ENCODE measurements at regions of chr1 and their contacts with region 1.

Region 1: GRCh38 chr1:6794164-6794563 is 8.9 kb downstream of the CAMTA1 start:
- DNase-seq: peak; percentile 71
- H3K4me3 ChIP-seq: no peak overlapping the region
- H3K27ac ChIP-seq: no peak overlapping the region
- H3K4me1 ChIP-seq: peaks cover 29% of the 10 kb centered on the region
- H3K27me3 ChIP-seq: no peaks in the 10 kb centered on the region
- CTCF ChIP-seq: peak in 1 of 2 donors; percentile 16
- POLR2A ChIP-seq: no peak

Region 2: DNA sequence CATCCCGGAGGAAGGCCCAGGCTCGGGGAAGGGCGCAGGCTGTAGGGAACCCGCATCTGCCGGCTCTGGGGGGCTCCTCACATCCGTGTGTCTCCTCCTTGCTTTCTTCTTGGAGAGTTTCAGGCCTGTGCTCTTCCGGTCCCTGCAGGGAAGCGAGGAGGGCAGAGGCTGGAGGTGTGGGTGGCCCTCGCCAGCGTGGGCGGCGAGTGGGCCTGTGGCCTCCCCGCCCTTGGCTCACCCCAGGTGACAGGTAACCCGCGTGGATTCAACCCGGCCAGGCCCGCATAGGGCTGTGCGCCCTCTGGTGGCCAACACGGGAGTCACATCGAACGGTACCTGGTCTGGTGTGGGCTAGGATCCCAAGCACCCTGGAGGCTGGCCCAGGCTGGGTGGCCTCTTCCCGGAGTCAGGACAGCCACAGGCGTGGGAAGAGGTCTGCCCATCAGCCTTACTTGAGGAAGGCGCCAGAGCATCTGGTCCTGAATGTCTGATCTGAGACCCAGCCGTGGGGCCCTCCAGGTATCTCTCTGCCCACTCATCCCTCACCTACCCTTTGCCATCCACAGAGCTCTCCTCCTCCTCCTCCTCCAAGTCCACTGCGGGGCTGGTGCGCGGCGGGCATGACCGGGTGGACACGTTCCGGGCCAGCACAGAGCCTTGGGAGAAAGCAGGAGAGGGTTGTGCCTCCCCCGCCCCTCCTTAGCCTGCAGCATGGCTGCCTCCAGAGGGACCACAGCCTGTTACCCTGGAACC is 318.6 kb before region 1 on chr1:
- CTCF ChIA-PET with region 1: no interaction called
- POLR2A ChIA-PET with region 1: no interaction called
- dilution Hi-C with region 1: no loop called
- intact Hi-C with region 1: no loop called
- DNase-seq: no peak
- H3K4me3 ChIP-seq: no peak overlapping the region
- H3K27ac ChIP-seq: no peak overlapping the region
- H3K4me1 ChIP-seq: no peaks in the 10 kb centered on the region
- H3K27me3 ChIP-seq: no peaks in the 10 kb centered on the region
- CTCF ChIP-seq: peak; percentile 93 to 95
- POLR2A ChIP-seq: no peak

Region 3: DNA sequence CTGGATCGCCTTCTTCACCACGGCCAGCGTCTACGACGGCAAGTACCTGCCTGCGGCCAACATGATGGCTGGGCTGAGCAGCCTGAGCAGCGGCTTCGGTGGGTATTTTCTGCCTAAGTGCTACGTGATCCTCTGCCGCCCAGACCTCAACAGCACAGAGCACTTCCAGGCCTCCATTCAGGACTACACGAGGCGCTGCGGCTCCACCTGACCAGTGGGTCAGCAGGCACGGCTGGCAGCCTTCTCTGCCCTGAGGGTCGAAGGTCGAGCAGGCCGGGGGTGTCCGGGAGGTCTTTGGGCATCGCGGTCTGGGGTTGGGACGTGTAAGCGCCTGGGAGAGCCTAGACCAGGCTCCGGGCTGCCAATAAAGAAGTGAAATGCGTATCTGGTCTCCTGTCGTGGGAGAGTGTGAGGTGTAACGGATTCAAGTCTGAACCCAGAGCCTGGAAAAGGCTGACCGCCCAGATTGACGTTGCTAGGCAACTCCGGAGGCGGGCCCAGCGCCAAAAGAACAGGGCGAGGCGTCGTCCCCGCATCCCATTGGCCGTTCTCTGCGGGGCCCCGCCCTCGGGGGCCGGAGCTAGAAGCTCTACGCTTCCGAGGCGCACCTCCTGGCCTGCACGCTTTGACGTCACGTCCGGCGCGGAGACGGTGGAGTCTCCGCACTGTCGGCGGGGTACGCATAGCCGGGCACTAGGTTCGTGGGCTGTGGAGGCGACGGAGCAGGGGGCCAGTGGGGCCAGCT is 214.6 kb before region 1 on chr1 and contains the start of gene ZBTB48:
- CTCF ChIA-PET with region 1: no interaction called
- POLR2A ChIA-PET with region 1: no interaction called
- dilution Hi-C with region 1: no loop called
- intact Hi-C with region 1: no loop called
- DNase-seq: peak; percentile 97
- H3K4me3 ChIP-seq: peak within 1 kb of the TSS; percentile 57 to 98 (median 65)
- H3K27ac ChIP-seq: peak within 1 kb of the TSS; percentile 57
- H3K4me1 ChIP-seq: peaks cover 14% of the 10 kb centered on the region
- H3K27me3 ChIP-seq: no peaks in the 10 kb centered on the region
- CTCF ChIP-seq: no peak
- POLR2A ChIP-seq: peak; percentile 98
- total RNA-seq, gene ZBTB48: 25.1 and 29.2 TPM in 2 replicates

Region 4: GRCh38 chr1:6777813-6778212 is 16.4 kb before region 1 on chr1:
- CTCF ChIA-PET with region 1: no interaction called
- POLR2A ChIA-PET with region 1: no interaction called
- dilution Hi-C with region 1: no loop called
- intact Hi-C with region 1: no loop called
- DNase-seq: no peak
- H3K4me3 ChIP-seq: no peak overlapping the region
- H3K27ac ChIP-seq: no peak overlapping the region
- H3K4me1 ChIP-seq: no peaks in the 10 kb centered on the region
- H3K27me3 ChIP-seq: no peaks in the 10 kb centered on the region
- CTCF ChIP-seq: no peak
- POLR2A ChIP-seq: no peak

Region 5: GRCh38 chr1:6889875-6890480 is 95.8 kb after region 1 on chr1:
- CTCF ChIA-PET with region 1: interaction called, 71 read pairs
- POLR2A ChIA-PET with region 1: no interaction called
- dilution Hi-C with region 1: no loop called
- intact Hi-C with region 1: loop called (anchors 1 kb)
- DNase-seq: peak; percentile 82
- H3K4me3 ChIP-seq: no peak overlapping the region
- H3K27ac ChIP-seq: no peak overlapping the region
- H3K4me1 ChIP-seq: no peaks in the 10 kb centered on the region
- H3K27me3 ChIP-seq: no peaks in the 10 kb centered on the region
- CTCF ChIP-seq: peak; percentile 76 to 88
- POLR2A ChIP-seq: no peak

Region 6: GRCh38 chr1:6962996-6963911 is 169.1 kb after region 1 on chr1:
- CTCF ChIA-PET with region 1: interaction called, 4 read pairs
- POLR2A ChIA-PET with region 1: no interaction called
- dilution Hi-C with region 1: no loop called
- intact Hi-C with region 1: loop called (anchors 1 kb)
- DNase-seq: peak; percentile 30
- H3K4me3 ChIP-seq: no peak overlapping the region
- H3K27ac ChIP-seq: no peak overlapping the region
- H3K4me1 ChIP-seq: no peaks in the 10 kb centered on the region
- H3K27me3 ChIP-seq: peaks cover 0 to 6% of the 10 kb centered on the region in 2 experiments
- CTCF ChIP-seq: no peak
- POLR2A ChIP-seq: no peak

Region 7: DNA sequence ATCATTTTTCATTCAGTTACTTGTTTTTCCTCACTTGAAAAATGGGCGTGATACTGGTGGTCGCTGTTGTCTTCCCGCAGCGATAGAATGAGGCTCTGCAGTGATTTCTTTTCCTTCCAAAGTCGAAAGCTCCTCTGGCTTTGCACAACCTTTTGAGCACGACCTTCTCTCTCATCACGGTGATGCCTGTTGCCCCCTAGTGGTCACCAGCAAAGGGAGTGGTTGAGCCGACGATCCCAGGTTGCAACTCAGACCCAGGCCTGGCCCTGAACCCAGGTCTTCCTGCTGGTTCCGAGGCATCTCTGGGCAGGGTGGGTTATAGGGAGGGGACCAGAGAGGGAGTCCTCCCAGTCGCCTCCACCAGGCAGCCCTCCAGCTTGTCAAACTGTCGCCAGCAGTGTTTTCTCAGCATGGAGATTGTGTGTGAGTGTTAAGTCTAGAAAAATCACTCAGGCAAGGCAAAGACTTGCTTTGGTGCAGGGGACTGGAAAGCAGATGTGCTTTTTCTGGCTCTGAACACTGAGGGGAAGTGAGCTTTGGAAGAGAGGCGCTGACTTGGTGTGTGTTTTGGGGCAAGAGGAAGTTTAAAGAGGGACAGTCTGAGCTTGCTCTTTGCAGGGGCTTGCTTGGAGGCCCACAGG is 276.3 kb after region 1 on chr1:
- CTCF ChIA-PET with region 1: interaction called, 71 read pairs
- POLR2A ChIA-PET with region 1: no interaction called
- dilution Hi-C with region 1: no loop called
- intact Hi-C with region 1: loop called (anchors 1 kb)
- DNase-seq: peak; percentile 69
- H3K4me3 ChIP-seq: peak overlapping the region in 2 of 3 experiments; percentile 16 to 20
- H3K27ac ChIP-seq: no peak overlapping the region
- H3K4me1 ChIP-seq: peaks cover 4% of the 10 kb centered on the region
- H3K27me3 ChIP-seq: no peaks in the 10 kb centered on the region
- CTCF ChIP-seq: peak; percentile 73 to 95
- POLR2A ChIP-seq: no peak

Region 8: DNA sequence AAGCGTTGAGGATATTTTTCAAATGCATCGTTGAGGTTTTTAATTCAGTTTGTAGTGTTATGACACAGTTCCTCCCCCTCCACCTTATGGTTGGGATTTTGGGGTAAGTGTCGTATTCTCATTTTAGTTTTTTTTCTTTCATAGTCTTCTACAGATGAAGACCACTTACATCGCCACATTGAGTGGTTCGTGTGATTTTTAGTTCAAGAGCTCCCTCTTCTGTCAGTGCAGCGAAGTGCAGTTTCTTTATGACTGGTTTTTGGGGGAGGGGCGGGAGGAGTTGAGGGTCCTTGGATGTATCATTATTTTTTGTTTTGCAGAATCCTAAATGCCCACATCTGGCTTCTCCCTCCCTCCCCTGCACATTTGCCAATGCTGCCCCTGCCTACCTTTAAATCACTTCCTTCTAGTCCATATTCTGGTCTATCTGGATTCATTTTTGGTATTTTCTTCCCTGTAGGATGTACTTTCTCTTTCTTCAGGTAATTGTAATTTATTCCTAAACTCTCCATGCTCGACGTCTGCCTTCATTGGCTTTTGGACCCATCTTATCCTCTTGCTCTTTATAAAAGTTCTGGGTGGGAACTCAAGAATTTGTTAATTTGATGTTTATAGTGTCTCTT is 424.2 kb after region 1 on chr1:
- CTCF ChIA-PET with region 1: interaction called, 5 read pairs
- POLR2A ChIA-PET with region 1: no interaction called
- dilution Hi-C with region 1: no loop called
- intact Hi-C with region 1: loop called (anchors 1 kb)
- DNase-seq: peak; percentile 62
- H3K4me3 ChIP-seq: no peak overlapping the region
- H3K27ac ChIP-seq: no peak overlapping the region
- H3K4me1 ChIP-seq: no peaks in the 10 kb centered on the region
- H3K27me3 ChIP-seq: no peaks in the 10 kb centered on the region
- CTCF ChIP-seq: peak; percentile 66 to 74
- POLR2A ChIP-seq: no peak

Measured in endothelial cell of umbilical vein (primary cell).